Spleen (tissue), 13 donors: ENCODE measurements at regions of chr7 and their contacts with region 1.

Region 1: DNA sequence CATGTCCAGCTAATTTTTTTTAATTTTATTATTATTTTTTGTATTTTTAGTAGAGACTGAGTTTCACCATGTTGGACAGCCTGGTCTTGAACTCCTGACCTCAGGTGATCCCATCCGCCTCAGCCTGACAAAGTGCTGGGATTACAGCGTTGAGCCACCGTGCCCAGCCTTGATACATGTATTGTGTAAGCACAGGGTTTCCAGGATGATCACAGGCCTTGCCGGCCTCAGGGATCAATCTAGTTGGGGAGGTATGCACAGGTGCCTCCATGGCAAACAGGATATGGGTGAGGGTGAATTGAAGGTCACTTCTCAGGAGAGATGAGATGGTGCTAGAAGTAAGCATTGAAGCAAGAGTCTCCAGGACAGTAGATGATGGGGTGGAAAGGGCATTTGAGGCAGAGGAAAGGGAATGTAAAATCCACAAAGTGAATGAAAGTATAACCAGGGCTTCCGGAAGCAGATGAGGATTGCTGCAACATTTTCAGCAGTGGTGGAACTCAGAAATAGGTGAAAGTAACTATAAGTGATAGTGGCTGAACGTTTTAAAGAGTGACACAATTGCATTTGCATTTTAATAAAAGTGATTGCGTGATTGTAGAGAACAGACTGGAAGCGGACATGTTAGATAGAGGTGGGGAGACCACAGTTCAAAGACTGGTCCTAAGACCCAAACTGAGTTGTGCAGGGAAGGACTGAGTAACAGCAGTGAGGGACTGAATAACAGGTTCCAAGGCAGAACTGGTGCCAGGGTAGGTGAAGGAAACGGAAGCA is 5.7 kb downstream of the MRPS17 start:
- DNase-seq: no peak
- H3K4me3 ChIP-seq: no peak overlapping the region
- H3K27ac ChIP-seq: no peak overlapping the region
- H3K4me1 ChIP-seq: peaks cover 4 to 17% (median 14%) of the 10 kb centered on the region in 6 donors
- H3K27me3 ChIP-seq: no peaks in the 10 kb centered on the region
- CTCF ChIP-seq: no peak
- POLR2A ChIP-seq: no peak

Region 2: DNA sequence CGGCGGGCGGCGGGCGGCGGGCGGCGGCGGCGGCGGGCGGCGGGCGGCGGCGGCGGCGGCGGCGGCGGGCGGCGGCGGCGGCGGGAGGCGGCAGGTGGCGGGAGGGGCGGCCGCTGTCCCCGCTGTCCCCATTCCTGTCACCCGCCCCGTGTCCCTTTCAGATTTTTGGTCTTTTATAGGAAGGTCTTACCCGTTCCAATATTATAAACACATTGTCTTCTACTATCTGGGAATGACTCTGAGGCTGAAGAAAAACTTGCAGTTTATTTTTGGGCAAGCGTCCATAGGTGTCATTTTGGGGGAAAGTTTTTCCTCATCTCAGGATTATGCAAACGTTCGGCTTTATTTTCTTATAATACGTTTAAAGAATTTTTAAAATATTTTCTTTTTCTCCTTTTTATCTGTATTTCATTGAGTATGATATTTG is 69.5 kb before region 1 on chr7:
- intact Hi-C with region 1: loop called (anchors 5 kb)
- DNase-seq: no peak
- H3K4me3 ChIP-seq: peak overlapping the region in 7 of 8 donors; percentile 28 to 96 (median 37)
- H3K27ac ChIP-seq: peak overlapping the region in 6 of 8 donors; percentile 38 to 97 (median 56)
- H3K4me1 ChIP-seq: peaks cover 0 to 15% (median 12%) of the 10 kb centered on the region in 6 donors
- H3K27me3 ChIP-seq: no peaks in the 10 kb centered on the region
- CTCF ChIP-seq: no peak
- POLR2A ChIP-seq: no peak